ENCODE measurements at regions of chr14 and their contacts with region 1.

Region 1: DNA sequence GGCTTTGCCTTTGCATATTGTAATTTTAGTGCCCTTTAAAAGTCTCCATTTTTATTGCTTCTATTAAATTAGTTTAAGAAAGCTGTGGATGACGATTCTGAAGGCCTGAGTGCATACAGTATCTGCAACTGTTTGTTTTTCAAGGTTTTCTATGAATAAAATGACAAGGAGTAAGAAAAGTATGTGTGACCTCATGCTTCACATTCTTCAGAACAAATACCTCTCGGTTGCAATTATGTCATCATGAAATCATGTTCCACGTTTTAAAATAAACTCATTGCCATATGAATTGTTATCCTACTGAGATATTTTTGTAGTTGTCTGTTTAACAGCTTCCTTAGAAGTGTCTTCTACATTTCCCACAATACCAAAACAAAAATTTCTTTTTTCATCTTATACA is 374.6 kb downstream of the MDGA2 start:
- DNase-seq: no peak
- ATAC-seq: no peak
- H3K4me3 ChIP-seq: no peak overlapping the region
- H3K27ac ChIP-seq: no peak overlapping the region
- H3K4me1 ChIP-seq: no peaks in the 10 kb centered on the region
- H3K27me3 ChIP-seq: no peaks in the 10 kb centered on the region
- CTCF ChIP-seq: no peak
- EP300 ChIP-seq: no peak
- POLR2A ChIP-seq: no peak
- RAD21 ChIP-seq: no peak

Region 2: GRCh38 chr14:47278234-47278842 is 22.5 kb before region 1 on chr14:
- CTCF ChIA-PET with region 1: interaction called, 11 read pairs
- POLR2A ChIA-PET with region 1: no interaction called
- RAD21 ChIA-PET with region 1: no interaction called
- SMC1A ChIA-PET with region 1: no interaction called
- in situ Hi-C with region 1: no loop called
- intact Hi-C with region 1: no loop called
- DNase-seq: no peak
- ATAC-seq: peak; percentile 94
- H3K4me3 ChIP-seq: no peak overlapping the region
- H3K27ac ChIP-seq: no peak overlapping the region
- H3K4me1 ChIP-seq: no peaks in the 10 kb centered on the region
- H3K27me3 ChIP-seq: no peaks in the 10 kb centered on the region
- CTCF ChIP-seq: peak; percentile 55 to 72 (median 68)
- EP300 ChIP-seq: no peak
- POLR2A ChIP-seq: no peak
- RAD21 ChIP-seq: peak; percentile 59